Head of caudate nucleus (tissue), 42 donors: ENCODE measurements at regions of chr2 and their contacts with region 1.

Region 1: GRCh38 chr2:64488050-64488974 is 34.4 kb downstream of the LGALSL start:
- DNase-seq: peak; percentile 17 to 91 (median 70)

Region 2: DNA sequence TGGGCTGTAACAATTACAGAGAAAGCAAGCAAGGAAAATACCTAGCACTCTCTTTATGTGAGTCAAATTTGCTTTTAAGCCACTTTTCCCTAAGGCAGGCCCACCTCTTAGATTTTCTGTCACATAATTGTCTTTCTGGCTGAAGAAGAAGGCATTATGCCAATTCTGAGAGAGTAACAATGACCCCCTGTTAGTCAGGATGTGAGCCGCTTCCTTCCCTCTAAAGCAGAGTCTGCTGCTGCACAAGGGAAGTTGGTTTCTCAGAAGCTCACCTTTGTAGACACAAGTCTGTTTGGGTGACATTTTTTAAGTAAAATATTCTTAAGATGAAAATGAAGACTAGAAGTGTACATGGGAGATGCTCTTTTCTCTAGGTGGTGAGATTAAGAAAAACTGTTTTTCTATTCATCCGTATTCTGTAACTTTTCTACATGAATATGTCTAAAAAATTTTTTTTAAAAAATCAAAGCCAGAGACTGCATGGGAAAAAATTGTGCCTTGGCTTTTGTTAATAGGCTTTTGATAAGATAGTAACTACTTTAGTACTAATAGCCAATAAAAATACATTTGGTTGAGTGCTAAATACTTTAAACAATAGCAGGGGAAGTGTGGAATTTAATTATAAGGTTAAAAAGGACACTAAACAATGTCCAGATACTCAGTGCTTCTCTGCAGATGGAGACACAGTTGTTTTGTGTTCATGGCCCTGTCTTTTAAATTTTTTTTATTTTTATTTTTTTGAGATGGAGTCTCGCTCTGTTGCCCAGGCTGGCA is 435.7 kb before region 1 on chr2:
- intact Hi-C with region 1: loop called (anchors 10 kb)
- DNase-seq: peak in 4 of 42 donors; percentile 15 to 46 (median 26)